Activated CD8-positive, alpha-beta T cell treated with anti-CD3 and anti-CD28 coated beads for 36 hours (primary cell): ENCODE measurements at regions of chr1 and their contacts with region 1.

Region 1: GRCh38 chr1:24201941-24202440 is 14.9 kb upstream of the IFNLR1 start:
- DNase-seq: peak; percentile 80
- ATAC-seq: peak; percentile 41
- H3K4me3 Mint-ChIP-seq: no peak overlapping the region
- H3K27ac Mint-ChIP-seq: no peak overlapping the region
- H3K4me1 Mint-ChIP-seq: peaks cover 14% of the 10 kb centered on the region
- H3K27me3 Mint-ChIP-seq: peaks cover 11% of the 10 kb centered on the region
- CTCF ChIP-seq: peak; percentile 97

Region 2: DNA sequence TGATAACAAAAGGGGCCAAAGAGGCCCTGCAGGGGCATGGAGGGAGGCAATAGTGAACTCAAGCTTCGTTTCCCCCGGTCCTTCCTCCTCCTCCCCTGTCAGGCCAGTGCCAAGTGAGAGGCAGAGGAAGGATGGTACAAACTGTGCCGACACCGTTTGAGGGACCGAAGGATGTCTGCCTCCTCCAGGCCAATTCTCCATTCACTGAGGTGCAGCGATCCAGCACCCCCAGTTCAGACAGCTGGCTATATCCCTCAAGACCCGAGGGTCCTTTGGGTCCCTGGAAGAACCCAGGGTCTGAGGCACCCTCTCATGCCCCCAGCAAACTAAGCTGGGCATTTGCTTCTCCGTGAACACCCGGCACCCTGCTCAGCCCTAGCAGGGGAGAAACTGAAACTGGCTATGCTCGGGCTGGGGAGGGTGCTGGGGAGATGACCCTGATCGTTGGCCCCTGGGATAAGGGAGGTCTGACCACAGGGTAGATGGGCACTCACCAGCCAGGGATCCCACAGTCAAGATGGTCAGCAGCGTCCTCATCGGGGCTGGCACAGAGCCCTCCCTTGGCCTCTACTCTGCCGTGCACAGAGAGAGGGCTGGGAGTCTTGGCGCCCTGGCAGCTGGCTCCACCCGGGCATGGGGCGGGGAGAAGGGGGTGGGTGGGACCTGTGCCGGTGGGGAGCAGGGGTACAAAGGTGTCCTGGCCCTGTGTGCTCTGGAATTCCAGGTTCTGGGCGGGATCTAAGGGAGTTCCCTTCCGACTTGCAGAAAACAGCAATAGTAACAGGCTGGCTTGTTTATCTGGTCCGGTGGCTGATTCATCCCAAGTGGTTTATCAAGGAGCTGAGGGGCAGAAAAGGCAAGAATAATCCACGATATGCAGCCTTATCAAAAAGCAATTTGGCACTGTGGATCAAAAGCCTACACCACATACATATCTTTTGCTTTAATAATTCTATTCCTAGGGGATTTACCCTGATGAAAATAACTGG is 59.2 kb before region 1 on chr1 and contains the start of gene IL22RA1:
- CTCF ChIA-PET with region 1: no interaction called
- POLR2A ChIA-PET with region 1: no interaction called
- intact Hi-C with region 1: no loop called
- DNase-seq: no peak
- ATAC-seq: no peak
- H3K4me3 Mint-ChIP-seq: no peak within 1 kb of the TSS
- H3K27ac Mint-ChIP-seq: no peak within 1 kb of the TSS
- H3K4me1 Mint-ChIP-seq: peaks cover 3% of the 10 kb centered on the region
- H3K27me3 Mint-ChIP-seq: peaks cover 10% of the 10 kb centered on the region
- CTCF ChIP-seq: no peak
- total RNA-seq, gene IL22RA1: not detected

Region 3: GRCh38 chr1:24167008-24167407 is 35.0 kb before region 1 on chr1:
- CTCF ChIA-PET with region 1: no interaction called
- POLR2A ChIA-PET with region 1: no interaction called
- intact Hi-C with region 1: no loop called
- DNase-seq: no peak
- ATAC-seq: no peak
- H3K4me3 Mint-ChIP-seq: no peak overlapping the region
- H3K27ac Mint-ChIP-seq: no peak overlapping the region
- H3K4me1 Mint-ChIP-seq: no peaks in the 10 kb centered on the region
- H3K27me3 Mint-ChIP-seq: no peaks in the 10 kb centered on the region
- CTCF ChIP-seq: no peak

Region 4: DNA sequence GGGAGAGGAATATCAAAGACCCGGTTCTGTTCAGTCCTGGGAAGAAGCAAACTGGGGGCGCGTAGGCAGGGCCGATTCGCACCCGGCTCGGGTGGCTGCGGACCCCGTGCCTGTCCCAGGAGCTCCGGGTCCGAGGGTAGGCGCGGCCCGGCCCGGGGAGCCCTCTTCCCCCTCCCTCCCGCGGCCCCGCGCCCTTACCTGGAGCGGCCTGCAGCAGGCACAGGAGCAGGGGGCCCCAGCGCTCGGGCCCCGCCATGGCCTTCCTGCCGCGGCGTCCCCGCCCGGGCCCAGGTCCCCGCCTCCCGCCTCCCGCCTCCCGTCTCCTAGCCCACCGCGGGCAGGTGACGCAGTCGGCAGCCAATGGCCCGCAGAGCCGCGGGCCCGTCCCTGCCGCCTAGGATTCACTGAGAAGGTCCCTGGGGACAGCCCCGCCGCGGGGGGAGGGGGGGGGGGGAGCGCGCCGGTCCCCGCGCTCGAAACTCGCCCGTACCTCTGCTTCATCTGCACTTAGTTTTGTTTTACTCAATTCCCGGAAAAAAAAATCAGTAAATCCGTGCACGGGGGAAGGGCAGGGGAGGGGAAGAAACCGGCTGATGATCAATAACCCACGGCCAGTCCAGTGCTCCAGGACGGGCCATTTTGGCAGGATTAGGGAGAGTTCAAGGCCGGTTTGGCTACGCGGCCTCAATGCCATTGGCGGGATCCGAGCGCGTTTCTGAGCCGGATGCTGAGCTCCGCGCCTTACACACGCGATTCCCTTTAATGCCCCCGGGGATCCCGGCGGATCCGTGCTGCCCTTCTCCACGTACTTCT is 14.8 kb before region 1 on chr1 and contains the start of gene IFNLR1:
- CTCF ChIA-PET with region 1: interaction called, 127 read pairs
- POLR2A ChIA-PET with region 1: interaction called, 6 read pairs
- intact Hi-C with region 1: no loop called
- DNase-seq: peak; percentile 91
- ATAC-seq: peak; percentile 90
- H3K4me3 Mint-ChIP-seq: peak within 1 kb of the TSS; percentile 78
- H3K27ac Mint-ChIP-seq: peak within 1 kb of the TSS; percentile 56
- H3K4me1 Mint-ChIP-seq: peaks cover 65% of the 10 kb centered on the region
- H3K27me3 Mint-ChIP-seq: no peaks in the 10 kb centered on the region
- CTCF ChIP-seq: no peak
- total RNA-seq, gene IFNLR1: 4.8 to 6.4 TPM

Region 5: GRCh38 chr1:24321697-24322469 is 119.9 kb after region 1 on chr1:
- CTCF ChIA-PET with region 1: interaction called, 22 read pairs
- POLR2A ChIA-PET with region 1: no interaction called
- intact Hi-C with region 1: no loop called
- DNase-seq: peak; percentile 87
- ATAC-seq: peak; percentile 81
- H3K4me3 Mint-ChIP-seq: peak overlapping the region; percentile 60
- H3K27ac Mint-ChIP-seq: no peak overlapping the region
- H3K4me1 Mint-ChIP-seq: peaks cover 41% of the 10 kb centered on the region
- H3K27me3 Mint-ChIP-seq: peaks cover 76% of the 10 kb centered on the region
- CTCF ChIP-seq: no peak

Region 6: GRCh38 chr1:24379733-24380315 is 177.8 kb after region 1 on chr1:
- CTCF ChIA-PET with region 1: interaction called, 137 read pairs
- POLR2A ChIA-PET with region 1: no interaction called
- intact Hi-C with region 1: no loop called
- DNase-seq: no peak
- ATAC-seq: no peak
- H3K4me3 Mint-ChIP-seq: no peak overlapping the region
- H3K27ac Mint-ChIP-seq: no peak overlapping the region
- H3K4me1 Mint-ChIP-seq: peaks cover 8% of the 10 kb centered on the region
- H3K27me3 Mint-ChIP-seq: no peaks in the 10 kb centered on the region
- CTCF ChIP-seq: no peak

Region 7: DNA sequence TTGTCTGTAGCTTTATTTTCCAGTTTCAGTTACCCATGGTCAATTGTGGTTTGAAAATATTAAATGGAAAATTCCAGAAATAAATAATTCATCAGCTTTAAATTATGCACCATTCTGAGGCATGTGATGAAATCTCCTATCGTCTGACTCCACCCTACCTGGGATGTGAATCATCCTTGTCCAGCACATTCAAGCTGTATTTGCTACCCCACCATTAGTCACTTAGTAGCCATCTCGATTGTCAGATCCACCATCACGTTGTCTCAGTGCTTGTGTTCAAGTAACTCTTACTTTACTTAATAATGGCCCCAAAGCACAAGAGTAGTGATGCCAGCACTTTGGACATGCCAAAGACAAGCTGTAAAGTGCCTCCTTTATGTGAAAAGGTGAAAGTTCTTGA is 207.5 kb after region 1 on chr1:
- CTCF ChIA-PET with region 1: interaction called, 16 read pairs
- POLR2A ChIA-PET with region 1: no interaction called
- intact Hi-C with region 1: no loop called
- DNase-seq: no peak
- ATAC-seq: no peak
- H3K4me3 Mint-ChIP-seq: no peak overlapping the region
- H3K27ac Mint-ChIP-seq: no peak overlapping the region
- H3K4me1 Mint-ChIP-seq: peaks cover 13% of the 10 kb centered on the region
- H3K27me3 Mint-ChIP-seq: no peaks in the 10 kb centered on the region
- CTCF ChIP-seq: no peak

Region 8: GRCh38 chr1:24635195-24635843 is 433.3 kb after region 1 on chr1:
- CTCF ChIA-PET with region 1: interaction called, 33 read pairs
- POLR2A ChIA-PET with region 1: no interaction called
- intact Hi-C with region 1: no loop called
- DNase-seq: no peak
- ATAC-seq: peak; percentile 83
- H3K4me3 Mint-ChIP-seq: no peak overlapping the region
- H3K27ac Mint-ChIP-seq: no peak overlapping the region
- H3K4me1 Mint-ChIP-seq: peaks cover 10% of the 10 kb centered on the region
- H3K27me3 Mint-ChIP-seq: no peaks in the 10 kb centered on the region
- CTCF ChIP-seq: peak; percentile 66